MCF 10A (cell line): ENCODE measurements at regions of chr10 and their contacts with region 1.

Region 1: GRCh38 chr10:130179640-130180039 is 43.4 kb downstream of the GLRX3 start:
- DNase-seq: peak; percentile 51
- H3K4me3 Mint-ChIP-seq: no peak overlapping the region
- H3K27ac Mint-ChIP-seq: no peak overlapping the region
- H3K4me1 Mint-ChIP-seq: no peaks in the 10 kb centered on the region
- H3K27me3 Mint-ChIP-seq: no peaks in the 10 kb centered on the region
- CTCF ChIP-seq: peak; percentile 24

Region 2: DNA sequence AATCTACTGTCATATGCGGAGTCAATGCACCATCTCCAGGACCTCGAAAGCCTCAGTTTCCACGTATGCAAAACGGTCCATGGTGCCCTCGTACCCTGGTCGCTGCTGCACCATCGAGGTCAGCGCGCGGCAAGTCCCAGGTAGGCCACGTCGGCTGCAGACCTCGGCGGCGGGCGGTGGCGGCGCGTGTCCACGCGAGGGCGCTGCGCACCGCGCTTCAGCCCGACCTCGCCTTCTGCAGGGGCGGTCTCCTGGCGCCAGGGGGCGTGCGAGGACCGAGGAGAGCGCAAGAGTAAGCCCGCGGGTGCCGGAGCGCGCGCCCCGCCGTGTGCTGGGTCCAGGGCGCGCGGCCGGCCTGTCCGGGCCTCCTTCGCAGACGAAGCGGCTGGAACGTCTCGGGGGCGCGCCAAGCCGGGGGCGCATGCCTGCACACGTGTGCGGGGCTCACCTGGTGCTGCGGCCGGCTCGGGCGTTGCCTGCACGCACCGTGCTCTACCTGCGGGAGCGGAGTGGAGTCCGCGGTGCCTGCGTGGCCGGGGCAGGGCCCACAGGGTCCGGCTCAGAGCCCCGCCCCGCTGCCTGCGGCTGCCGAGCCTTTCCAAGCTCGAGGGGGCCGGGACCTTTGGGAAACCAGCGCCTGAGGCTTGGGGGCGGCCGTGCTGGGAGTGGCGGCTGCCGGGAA is 10.6 kb after region 1 on chr10:
- CTCF ChIA-PET with region 1: interaction called, 11 read pairs
- POLR2A ChIA-PET with region 1: no interaction called
- intact Hi-C with region 1: no loop called
- DNase-seq: peak; percentile 80
- H3K4me3 Mint-ChIP-seq: peak overlapping the region; percentile 10
- H3K27ac Mint-ChIP-seq: no peak overlapping the region
- H3K4me1 Mint-ChIP-seq: peaks cover 6% of the 10 kb centered on the region
- H3K27me3 Mint-ChIP-seq: no peaks in the 10 kb centered on the region
- CTCF ChIP-seq: peak; percentile 100

Region 3: GRCh38 chr10:130389906-130390305 is 210.3 kb after region 1 on chr10:
- CTCF ChIA-PET with region 1: no interaction called
- POLR2A ChIA-PET with region 1: no interaction called
- intact Hi-C with region 1: no loop called
- DNase-seq: no peak
- H3K4me3 Mint-ChIP-seq: no peak overlapping the region
- H3K27ac Mint-ChIP-seq: no peak overlapping the region
- H3K4me1 Mint-ChIP-seq: peaks cover 5% of the 10 kb centered on the region
- H3K27me3 Mint-ChIP-seq: no peaks in the 10 kb centered on the region
- CTCF ChIP-seq: no peak